Heart left ventricle (tissue), 16 donors: ENCODE measurements at regions of chr11 and their contacts with region 1.

Region 1: DNA sequence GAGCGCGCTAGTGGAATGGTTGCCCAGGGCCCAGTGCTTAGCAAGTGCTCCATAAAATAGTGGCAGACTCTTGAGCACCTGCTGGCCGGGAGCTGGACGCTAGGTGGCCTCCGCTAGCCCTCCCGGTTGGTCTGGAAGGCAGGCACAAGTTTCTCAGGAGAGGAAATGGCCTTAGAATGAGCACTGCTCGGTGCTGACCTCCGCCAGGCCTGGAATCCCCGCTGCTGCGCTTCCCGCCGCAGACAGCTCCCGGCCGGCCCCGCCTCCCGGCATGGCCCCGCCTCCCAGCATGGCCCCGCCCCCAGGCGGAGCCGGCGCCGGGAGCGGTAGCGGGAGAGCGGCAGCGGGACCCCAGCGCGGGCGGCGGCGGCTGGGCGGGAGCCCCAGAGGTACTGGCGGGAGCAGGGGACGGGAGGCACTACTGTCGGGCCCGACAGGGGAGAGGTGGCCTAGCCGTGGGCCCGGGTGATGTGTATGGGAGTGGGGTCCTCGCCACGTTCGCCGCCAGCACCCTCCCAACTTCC is at the start of gene SIPA1:
- DNase-seq: peak; percentile 85 to 91 (median 86)
- ATAC-seq: peak; percentile 70 to 86 (median 82)
- H3K4me3 ChIP-seq: peak within 1 kb of the TSS; percentile 47 to 95 (median 81)
- H3K27ac ChIP-seq: peak within 1 kb of the TSS; percentile 85 to 99 (median 94)
- H3K4me1 ChIP-seq: peaks cover 0 to 68% (median 39%) of the 10 kb centered on the region in 12 donors
- H3K27me3 ChIP-seq: no peaks in the 10 kb centered on the region
- CTCF ChIP-seq: peak in 11 of 12 donors; percentile 29 to 69 (median 56)
- POLR2A ChIP-seq: peak in 1 of 2 donors; percentile 93
- total RNA-seq, gene SIPA1: 17.0 to 63.3 (median 21.6) TPM

Region 2: GRCh38 chr11:65652511-65653231 is 14.8 kb after region 1 on chr11:
- intact Hi-C with region 1: loop called in 2 of 10 experiments (anchors 1 to 2 kb)
- DNase-seq: peak; percentile 96 to 98 (median 97)
- ATAC-seq: peak; percentile 82 to 93 (median 90)
- H3K4me3 ChIP-seq: peak overlapping the region; percentile 1 to 66 (median 60)
- H3K27ac ChIP-seq: peak overlapping the region; percentile 89 to 99 (median 96)
- H3K4me1 ChIP-seq: peaks cover 8 to 65% (median 40%) of the 10 kb centered on the region in 12 donors
- H3K27me3 ChIP-seq: no peaks in the 10 kb centered on the region
- CTCF ChIP-seq: peak in 2 of 12 donors; percentile 17 to 22
- POLR2A ChIP-seq: peak in 1 of 2 donors; percentile 72

Region 3: DNA sequence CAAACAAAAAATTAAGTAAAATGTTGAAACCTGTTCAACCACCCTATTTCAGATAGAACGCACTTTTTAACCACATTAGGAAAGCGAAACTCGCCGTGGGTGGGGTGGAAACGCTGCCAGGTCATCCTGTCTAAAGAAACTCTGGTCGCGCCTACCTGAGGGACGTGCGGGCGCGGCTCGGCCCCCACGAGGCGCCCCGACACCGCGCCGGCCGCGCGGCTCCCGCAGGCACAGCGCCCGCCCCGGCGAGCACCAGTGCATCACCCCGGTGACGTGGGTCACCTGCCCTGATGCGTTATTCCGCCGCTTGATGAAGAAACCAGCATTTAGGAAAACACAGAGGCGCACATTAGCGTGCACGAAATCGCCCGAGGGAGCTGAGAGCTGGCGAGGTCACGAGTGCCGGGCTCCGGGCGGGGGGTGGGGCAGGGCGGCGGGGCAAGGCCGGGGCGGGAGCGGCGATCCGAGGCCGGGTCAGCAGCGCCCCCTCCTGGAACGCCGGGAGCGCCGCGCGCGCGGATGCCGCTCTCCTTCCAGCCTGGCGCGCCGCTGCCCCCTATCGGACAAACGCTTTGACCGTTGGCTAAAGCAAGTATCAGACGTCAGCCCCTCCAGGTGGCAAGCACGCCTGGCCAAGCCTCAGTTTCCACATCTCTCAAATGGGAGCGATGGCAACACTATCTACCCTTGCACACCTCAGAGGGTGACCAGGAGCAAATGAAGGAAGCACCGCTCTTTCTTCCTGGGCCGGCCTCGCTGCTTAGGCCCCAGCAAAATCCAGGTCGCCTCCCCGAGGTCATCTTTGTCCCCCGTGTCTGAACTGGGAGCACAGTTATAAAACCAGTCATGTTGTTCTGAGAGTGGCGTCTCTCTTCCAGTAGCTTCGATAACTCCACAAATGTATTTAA is 180.2 kb after region 1 on chr11:
- intact Hi-C with region 1: loop called in 1 of 10 experiments (anchors 10 kb)
- DNase-seq: peak; percentile 92 to 97 (median 94)
- ATAC-seq: peak; percentile 62 to 98 (median 96)
- H3K4me3 ChIP-seq: peak overlapping the region; percentile 31 to 83 (median 67)
- H3K27ac ChIP-seq: peak overlapping the region in 11 of 12 donors; percentile 33 to 86 (median 62)
- H3K4me1 ChIP-seq: peaks cover 0 to 25% (median 5%) of the 10 kb centered on the region in 12 donors
- H3K27me3 ChIP-seq: no peaks in the 10 kb centered on the region
- CTCF ChIP-seq: peak in 11 of 12 donors; percentile 98 to 100 (median 100)
- POLR2A ChIP-seq: no peak